B cell (primary cell): ENCODE measurements at regions of chr11 and their contacts with region 1.

Region 1: GRCh38 chr11:95692526-95693260 is 96.9 kb downstream of the FAM76B start:
- DNase-seq: peak; percentile 33
- ATAC-seq: peak; percentile 59
- H3K4me3 ChIP-seq: peak overlapping the region in 1 of 5 experiments; percentile 21
- H3K4me3 Mint-ChIP-seq: no peak overlapping the region
- H3K27ac ChIP-seq: no peak overlapping the region
- H3K27ac Mint-ChIP-seq: no peak overlapping the region
- H3K4me1 ChIP-seq: peaks cover 31 to 33% of the 10 kb centered on the region in 2 donors
- H3K4me1 Mint-ChIP-seq: peaks cover 22% of the 10 kb centered on the region
- H3K27me3 ChIP-seq: no peaks in the 10 kb centered on the region
- H3K27me3 Mint-ChIP-seq: no peaks in the 10 kb centered on the region
- CTCF ChIP-seq: no peak

Region 2: GRCh38 chr11:95641495-95641894 is 51.2 kb before region 1 on chr11:
- CTCF ChIA-PET with region 1: no interaction called
- POLR2A ChIA-PET with region 1: no interaction called
- intact Hi-C with region 1: loop called (anchors 5 kb)
- DNase-seq: peak; percentile 66
- ATAC-seq: peak; percentile 91
- H3K4me3 ChIP-seq: peak overlapping the region in 1 of 5 experiments; percentile 8
- H3K4me3 Mint-ChIP-seq: peak overlapping the region; percentile 5
- H3K27ac ChIP-seq: peak overlapping the region in 1 of 2 donors; percentile 23
- H3K27ac Mint-ChIP-seq: peak overlapping the region; percentile 79
- H3K4me1 ChIP-seq: peaks cover 10 to 11% of the 10 kb centered on the region in 2 donors
- H3K4me1 Mint-ChIP-seq: peaks cover 13% of the 10 kb centered on the region
- H3K27me3 ChIP-seq: no peaks in the 10 kb centered on the region
- H3K27me3 Mint-ChIP-seq: no peaks in the 10 kb centered on the region
- CTCF ChIP-seq: no peak